HepG2 (cell line): ENCODE measurements at regions of chr6 and their contacts with region 1.

Region 1: GRCh38 chr6:10954590-10955010 is 67.7 kb downstream of the SYCP2L start:
- DNase-seq: peak; percentile 82
- ATAC-seq: peak; percentile 76
- H3K4me3 ChIP-seq: no peak overlapping the region; a peak in 1 of 6 replicates
- H3K27ac ChIP-seq: no peak overlapping the region
- H3K4me1 ChIP-seq: peaks cover 89% of the 10 kb centered on the region
- H3K27me3 ChIP-seq: no peaks in the 10 kb centered on the region
- CTCF ChIP-seq: peak; percentile 99
- EP300 ChIP-seq: peak in 1 of 2 experiments; percentile 19; a peak in 1 of 4 replicates
- POLR2A ChIP-seq: no peak
- RAD21 ChIP-seq: peak; percentile 96

Region 2: DNA sequence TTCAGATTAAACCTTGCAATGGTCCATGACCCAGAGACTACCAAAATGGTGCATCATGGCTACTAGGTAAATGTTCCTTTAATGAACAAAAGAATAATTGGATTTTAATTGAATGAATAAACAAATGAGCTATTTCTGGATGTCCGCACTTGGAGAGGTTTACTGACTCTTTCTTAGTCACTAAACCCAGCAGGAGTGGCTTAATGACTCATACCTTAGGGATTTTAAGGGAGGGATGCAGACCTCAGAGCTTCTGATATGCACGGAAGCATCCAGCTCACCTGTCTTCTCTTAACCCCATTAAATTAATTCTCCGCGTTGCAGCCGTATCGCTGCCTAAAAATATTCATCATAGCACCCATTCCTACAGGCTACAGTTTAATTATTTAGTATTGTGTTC is 1549.2 kb before region 1 on chr6:
- CTCF ChIA-PET with region 1: no interaction called
- POLR2A ChIA-PET with region 1: no interaction called
- in situ Hi-C with region 1: no loop called
- intact Hi-C with region 1: no loop called
- DNase-seq: no peak
- ATAC-seq: no peak
- H3K4me3 ChIP-seq: no peak overlapping the region
- H3K27ac ChIP-seq: no peak overlapping the region
- H3K4me1 ChIP-seq: no peaks in the 10 kb centered on the region
- H3K27me3 ChIP-seq: no peaks in the 10 kb centered on the region
- CTCF ChIP-seq: no peak
- EP300 ChIP-seq: no peak
- POLR2A ChIP-seq: no peak
- RAD21 ChIP-seq: no peak

Region 3: DNA sequence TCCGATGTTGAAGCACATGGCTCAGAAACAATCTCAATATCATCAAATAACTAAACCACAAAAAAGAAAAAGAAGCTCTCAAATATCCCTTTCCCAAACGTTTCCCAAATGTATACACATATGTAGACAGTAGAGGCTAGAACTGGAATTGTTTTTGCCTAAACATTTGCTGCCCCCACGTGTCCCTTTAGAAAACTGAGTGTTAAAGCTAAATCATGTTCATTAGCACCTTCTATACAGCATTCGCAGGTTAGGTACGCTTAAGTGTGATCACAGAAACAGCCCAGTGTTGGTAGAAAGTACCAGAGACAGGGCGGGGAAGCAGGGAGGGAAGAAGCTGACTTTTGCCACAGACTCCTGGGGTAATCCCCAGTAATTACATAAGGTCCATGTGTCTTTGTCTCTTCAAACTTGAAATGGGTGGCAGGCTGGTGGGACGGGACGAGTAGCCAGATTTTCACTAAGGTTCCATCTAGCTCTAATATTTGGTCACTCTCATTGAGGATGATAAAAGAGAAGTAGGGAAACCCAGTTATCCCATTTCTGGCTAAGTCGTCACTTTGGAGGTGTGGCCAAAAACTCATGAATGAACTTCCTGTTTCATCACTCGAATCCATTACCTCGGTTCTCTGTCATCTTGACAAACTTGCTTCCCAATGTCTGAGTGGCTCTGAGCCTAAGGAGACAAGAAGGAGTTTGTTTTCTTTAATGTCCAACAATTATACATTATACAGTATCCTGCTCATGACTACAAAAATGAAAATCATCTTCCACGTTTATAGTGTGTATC is 524.8 kb before region 1 on chr6:
- CTCF ChIA-PET with region 1: no interaction called
- POLR2A ChIA-PET with region 1: no interaction called
- in situ Hi-C with region 1: no loop called
- intact Hi-C with region 1: no loop called
- DNase-seq: peak; percentile 50
- ATAC-seq: peak; percentile 53
- H3K4me3 ChIP-seq: no peak overlapping the region
- H3K27ac ChIP-seq: no peak overlapping the region
- H3K4me1 ChIP-seq: peaks cover 7% of the 10 kb centered on the region
- H3K27me3 ChIP-seq: peaks cover 0 to 19% of the 10 kb centered on the region in 2 experiments; a peak in 3 of 5 replicates
- CTCF ChIP-seq: peak; percentile 79
- EP300 ChIP-seq: no peak
- POLR2A ChIP-seq: no peak
- RAD21 ChIP-seq: 0 out of 2 replicates have a peak, but pooled peaks have one; percentile 36

Region 4: GRCh38 chr6:11009353-11009752 is 54.8 kb after region 1 on chr6:
- CTCF ChIA-PET with region 1: interaction called, 10 read pairs
- POLR2A ChIA-PET with region 1: interaction called, 29 read pairs
- in situ Hi-C with region 1: loop called (anchors 5 kb)
- intact Hi-C with region 1: loop called (anchors 1 kb)
- DNase-seq: peak; percentile 65
- ATAC-seq: no peak
- H3K4me3 ChIP-seq: no peak overlapping the region
- H3K27ac ChIP-seq: peak overlapping the region; percentile 67
- H3K4me1 ChIP-seq: peaks cover 97% of the 10 kb centered on the region
- H3K27me3 ChIP-seq: no peaks in the 10 kb centered on the region
- CTCF ChIP-seq: no peak
- EP300 ChIP-seq: peak in 1 of 2 experiments; percentile 57; a peak in 2 of 4 replicates
- POLR2A ChIP-seq: 0 out of 4 replicates have a peak, but pooled peaks of 1 of the 2 experiments have one; percentile 31
- RAD21 ChIP-seq: no peak

Region 5: GRCh38 chr6:11043961-11044711 is 89.5 kb after region 1 on chr6 and contains the start of gene ELOVL2:
- CTCF ChIA-PET with region 1: interaction called, 309 read pairs
- POLR2A ChIA-PET with region 1: interaction called, 21 read pairs
- in situ Hi-C with region 1: loop called (anchors 5 kb)
- intact Hi-C with region 1: loop called (anchors 1 kb)
- DNase-seq: peak; percentile 59
- ATAC-seq: peak; percentile 84
- H3K4me3 ChIP-seq: peak within 1 kb of the TSS; percentile 86 to 99 (median 90)
- H3K27ac ChIP-seq: peak within 1 kb of the TSS; percentile 67
- H3K4me1 ChIP-seq: peaks cover 40% of the 10 kb centered on the region
- H3K27me3 ChIP-seq: no peaks in the 10 kb centered on the region; a peak in 1 of 5 replicates
- CTCF ChIP-seq: peak; percentile 90
- EP300 ChIP-seq: peak; percentile 49 to 59; a peak in 2 of 4 replicates
- POLR2A ChIP-seq: no peak
- RAD21 ChIP-seq: peak; percentile 100
- total RNA-seq, gene ELOVL2: 60.1 and 65.4 TPM in 2 replicates

Region 6: GRCh38 chr6:11064836-11065235 is 110.2 kb after region 1 on chr6:
- CTCF ChIA-PET with region 1: interaction called, 130 read pairs
- POLR2A ChIA-PET with region 1: interaction called, 18 read pairs
- in situ Hi-C with region 1: loop called (anchors 5 kb)
- intact Hi-C with region 1: loop called (anchors 1 kb)
- DNase-seq: no peak
- ATAC-seq: no peak
- H3K4me3 ChIP-seq: no peak overlapping the region
- H3K27ac ChIP-seq: no peak overlapping the region
- H3K4me1 ChIP-seq: peaks cover 47% of the 10 kb centered on the region
- H3K27me3 ChIP-seq: no peaks in the 10 kb centered on the region
- CTCF ChIP-seq: no peak
- EP300 ChIP-seq: no peak
- POLR2A ChIP-seq: no peak
- RAD21 ChIP-seq: no peak

Region 7: DNA sequence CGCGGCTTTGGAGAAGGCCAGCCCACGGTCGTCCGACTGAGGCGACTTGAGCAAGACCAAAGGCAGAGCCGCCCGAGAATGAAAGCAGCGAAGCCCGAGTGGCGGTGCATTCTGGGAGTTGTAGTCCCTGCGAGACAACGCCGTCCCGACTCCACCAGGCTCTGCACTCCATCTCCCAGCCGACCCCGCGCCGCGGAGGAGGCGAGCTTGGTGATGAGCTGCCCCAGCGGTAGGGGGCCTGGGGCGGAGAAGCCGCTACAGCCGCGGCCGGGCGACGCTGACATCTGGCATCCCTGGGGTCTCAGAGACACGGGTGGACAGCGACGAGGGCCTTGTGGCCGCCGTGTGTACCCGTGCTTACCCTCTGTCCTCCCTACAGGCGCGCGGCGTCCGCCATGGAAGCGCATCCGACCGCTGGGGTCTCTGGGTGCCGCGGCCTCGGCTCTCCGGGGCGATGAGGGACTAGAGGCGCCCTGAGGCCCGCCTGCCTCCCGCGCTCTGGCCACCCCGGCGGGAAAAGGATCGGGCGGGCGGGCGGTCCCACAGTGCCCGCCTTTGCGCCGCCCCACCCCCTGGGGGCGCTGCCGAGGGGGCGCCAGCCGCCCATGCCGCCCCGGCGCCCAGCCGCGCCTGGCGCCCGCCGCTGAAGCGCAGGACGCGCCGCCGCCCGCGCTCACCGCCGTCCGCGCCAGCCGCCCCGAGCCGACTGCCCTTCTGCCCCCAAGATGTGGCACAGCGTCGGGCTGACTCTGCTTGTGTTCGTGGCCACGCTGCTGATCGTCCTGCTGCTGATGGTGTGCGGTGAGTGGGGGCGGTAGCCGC is 139.2 kb after region 1 on chr6 and contains the start of gene SMIM13:
- CTCF ChIA-PET with region 1: no interaction called
- POLR2A ChIA-PET with region 1: interaction called, 13 read pairs
- in situ Hi-C with region 1: no loop called
- intact Hi-C with region 1: no loop called
- DNase-seq: peak; percentile 98
- ATAC-seq: peak; percentile 97
- H3K4me3 ChIP-seq: peak within 1 kb of the TSS; percentile 93 to 99 (median 97)
- H3K27ac ChIP-seq: peak within 1 kb of the TSS; percentile 90
- H3K4me1 ChIP-seq: peaks cover 44% of the 10 kb centered on the region
- H3K27me3 ChIP-seq: no peaks in the 10 kb centered on the region; a peak in 1 of 5 replicates
- CTCF ChIP-seq: peak; percentile 67
- EP300 ChIP-seq: peak in 1 of 2 experiments; percentile 20; a peak in 2 of 4 replicates
- POLR2A ChIP-seq: peak; percentile 89 to 92
- RAD21 ChIP-seq: peak; percentile 79
- total RNA-seq, gene SMIM13: 9.5 and 10.2 TPM in 2 replicates

Region 8: DNA sequence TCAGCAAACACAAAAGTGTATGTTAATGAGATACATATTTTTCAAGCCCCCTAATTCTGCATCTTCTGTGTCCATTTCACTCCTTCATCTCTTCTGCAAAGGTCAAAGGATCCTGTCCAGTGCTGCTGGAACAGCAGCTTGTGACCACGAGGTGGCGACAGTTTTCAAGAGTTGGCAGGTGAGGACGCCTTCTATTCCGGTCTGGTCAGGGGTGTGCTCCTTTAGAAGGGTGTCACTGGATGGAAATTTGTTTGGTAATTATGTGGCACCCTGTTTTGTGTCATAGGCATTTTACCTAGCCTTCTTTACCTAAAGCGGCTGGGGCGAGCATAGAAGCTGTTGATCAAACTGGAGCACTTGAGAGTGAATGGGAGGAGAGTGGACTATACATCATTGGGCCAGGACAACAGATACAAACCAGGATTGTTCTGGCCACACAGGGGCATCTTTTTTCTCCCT is 189.8 kb after region 1 on chr6:
- CTCF ChIA-PET with region 1: interaction called, 4 read pairs
- POLR2A ChIA-PET with region 1: no interaction called
- in situ Hi-C with region 1: no loop called
- intact Hi-C with region 1: loop called (anchors 10 kb)
- DNase-seq: peak; percentile 77
- ATAC-seq: peak; percentile 94
- H3K4me3 ChIP-seq: no peak overlapping the region
- H3K27ac ChIP-seq: no peak overlapping the region
- H3K4me1 ChIP-seq: peaks cover 16% of the 10 kb centered on the region
- H3K27me3 ChIP-seq: no peaks in the 10 kb centered on the region
- CTCF ChIP-seq: peak; percentile 99
- EP300 ChIP-seq: no peak
- POLR2A ChIP-seq: no peak
- RAD21 ChIP-seq: peak; percentile 95

Region 9: GRCh38 chr6:11575408-11576033 is 620.9 kb after region 1 on chr6:
- CTCF ChIA-PET with region 1: interaction called, 8 read pairs
- POLR2A ChIA-PET with region 1: no interaction called
- in situ Hi-C with region 1: loop called (anchors 5 kb)
- intact Hi-C with region 1: loop called (anchors 1 kb)
- DNase-seq: peak; percentile 82
- ATAC-seq: peak; percentile 100
- H3K4me3 ChIP-seq: no peak overlapping the region
- H3K27ac ChIP-seq: no peak overlapping the region
- H3K4me1 ChIP-seq: peaks cover 6% of the 10 kb centered on the region
- H3K27me3 ChIP-seq: no peaks in the 10 kb centered on the region
- CTCF ChIP-seq: peak; percentile 99
- EP300 ChIP-seq: peak in 1 of 2 experiments; percentile 18; a peak in 1 of 4 replicates
- POLR2A ChIP-seq: no peak
- RAD21 ChIP-seq: peak; percentile 89